Calu3 (cell line): ENCODE measurements at regions of chr6 and their contacts with region 1.

Region 1: DNA sequence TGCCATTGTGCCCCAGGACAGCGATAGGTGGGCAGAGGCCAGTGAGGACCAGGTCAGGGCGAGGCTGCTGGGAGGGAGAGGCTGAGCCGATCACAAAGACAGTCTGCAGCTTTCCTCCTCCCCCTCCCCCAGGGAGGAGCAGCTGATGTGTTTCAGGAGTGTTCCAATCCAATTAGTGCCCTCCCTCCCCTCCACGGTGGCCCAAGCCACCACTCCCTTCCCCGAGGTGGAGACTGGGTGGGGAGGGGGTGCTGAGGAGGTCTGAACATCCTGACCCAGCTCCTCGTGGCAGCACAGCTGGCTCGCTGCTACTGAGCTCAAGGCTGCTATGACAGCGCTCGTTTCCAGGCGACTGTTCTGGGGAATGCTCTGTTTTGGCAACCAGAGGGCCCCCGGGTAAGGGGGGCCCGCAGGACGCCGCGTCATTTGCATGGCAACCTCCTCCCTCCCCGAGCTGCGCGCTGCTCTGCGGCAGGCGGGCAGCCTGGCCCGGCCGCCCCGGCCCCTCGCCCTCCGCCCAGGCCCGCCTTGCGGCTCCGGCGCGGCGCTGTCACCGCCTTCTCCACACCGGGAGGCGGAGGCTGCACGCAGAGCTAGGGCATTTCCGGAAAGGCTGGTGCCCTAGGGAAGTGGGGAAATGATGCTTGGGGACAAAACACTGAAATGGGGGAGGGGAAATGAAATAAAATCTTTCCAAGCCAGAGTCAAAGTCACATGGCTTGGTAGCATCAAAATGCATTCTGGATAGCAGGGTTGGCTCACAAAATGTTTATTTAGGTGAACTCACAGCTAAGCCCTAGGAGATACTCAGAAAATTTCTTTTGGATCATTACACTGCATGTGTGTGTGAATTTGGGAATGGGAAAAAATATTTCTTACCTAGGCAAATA is 67.4 kb upstream of the PIM1 start:
- DNase-seq: peak; percentile 75
- H3K4me3 Mint-ChIP-seq: peak overlapping the region; percentile 67
- H3K27ac Mint-ChIP-seq: peak overlapping the region; percentile 81
- H3K4me1 Mint-ChIP-seq: peaks cover 45% of the 10 kb centered on the region
- H3K27me3 Mint-ChIP-seq: no peaks in the 10 kb centered on the region
- CTCF ChIP-seq: no peak

Region 2: DNA sequence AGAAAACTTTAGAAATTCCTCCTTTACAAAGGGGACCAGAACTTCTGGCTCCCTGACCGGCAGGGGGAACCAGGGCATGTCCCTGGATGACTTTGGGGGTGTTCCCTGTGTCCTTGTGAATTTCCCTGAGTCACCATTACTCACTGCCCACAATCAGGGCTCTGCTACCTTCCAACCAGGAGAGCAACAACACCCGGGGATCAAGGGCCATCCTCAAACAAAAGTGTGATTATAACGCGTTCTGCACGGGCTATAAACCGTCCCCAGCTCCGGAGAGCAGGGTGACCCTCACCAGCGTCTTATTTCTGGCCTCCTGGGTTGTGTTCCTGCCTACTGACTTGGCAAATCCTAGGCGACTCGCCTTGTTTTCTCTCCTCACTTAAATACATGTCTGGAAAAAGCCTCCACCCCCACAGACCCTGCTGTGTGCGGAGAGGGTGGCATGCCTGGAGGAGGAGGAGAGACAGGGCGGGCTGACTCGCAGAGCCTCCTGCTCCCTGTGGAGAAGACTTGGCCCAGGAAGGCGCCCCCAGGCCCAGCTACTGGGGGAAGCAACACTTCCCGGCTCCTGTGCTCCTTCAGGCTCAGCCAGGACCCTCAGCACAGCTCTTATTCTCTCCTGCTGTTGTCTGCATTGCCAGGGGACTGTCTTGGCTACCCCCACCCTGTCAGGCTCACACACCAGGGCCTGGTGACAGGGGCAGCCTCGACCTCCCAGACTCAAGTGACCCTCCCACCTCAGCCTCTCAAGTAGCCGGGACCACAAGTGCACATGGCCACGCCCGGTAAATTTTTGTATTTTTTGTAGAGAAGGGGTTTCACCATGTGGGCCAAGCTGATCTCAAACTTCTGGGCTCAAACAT is 42.9 kb before region 1 on chr6:
- CTCF ChIA-PET with region 1: interaction called, 8 read pairs
- intact Hi-C with region 1: loop called (anchors 5 kb)
- DNase-seq: peak; percentile 90
- H3K4me3 Mint-ChIP-seq: peak overlapping the region; percentile 53
- H3K27ac Mint-ChIP-seq: peak overlapping the region; percentile 79
- H3K4me1 Mint-ChIP-seq: peaks cover 64% of the 10 kb centered on the region
- H3K27me3 Mint-ChIP-seq: no peaks in the 10 kb centered on the region
- CTCF ChIP-seq: peak; percentile 77

Region 3: DNA sequence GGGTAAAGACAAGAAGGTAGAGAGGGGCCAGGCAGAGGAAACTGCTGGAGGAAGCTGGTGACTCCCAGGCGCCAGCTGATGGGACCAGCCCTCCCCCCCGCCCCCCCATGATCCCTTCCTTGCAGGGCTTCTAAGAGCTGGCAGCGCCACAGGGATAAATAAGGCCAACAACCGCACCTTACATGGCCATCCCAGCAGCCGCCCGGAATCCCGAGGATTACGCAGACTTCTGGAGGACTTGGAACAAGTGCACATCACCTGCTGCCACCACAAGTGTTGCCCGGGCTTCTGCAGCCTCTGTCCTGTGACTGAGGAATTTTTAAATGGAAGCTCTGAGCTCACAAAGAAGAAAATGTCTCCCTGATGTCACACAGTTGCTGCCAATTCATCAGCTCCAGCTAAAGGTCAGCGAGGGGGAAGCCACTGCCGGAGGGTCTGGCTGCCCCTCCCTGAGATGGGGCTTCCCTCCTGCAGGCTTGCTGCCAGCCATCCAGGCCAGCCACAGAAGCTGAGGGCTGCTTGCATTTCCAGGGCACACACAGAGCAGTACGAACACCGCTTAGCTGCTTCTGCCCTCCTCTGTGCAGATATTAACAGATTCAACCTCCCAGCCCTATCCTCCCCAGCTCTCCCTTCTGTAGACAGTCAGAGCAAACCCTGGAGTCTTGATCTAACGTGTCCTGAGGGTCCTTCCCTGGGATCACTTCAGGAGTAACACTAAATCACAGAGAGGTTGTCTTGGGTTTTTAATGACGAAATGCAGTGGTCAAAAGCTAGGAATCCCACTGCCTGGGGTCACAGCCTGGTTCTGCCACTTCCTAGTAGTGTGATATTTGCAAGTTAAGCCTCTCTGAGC is 28.8 kb after region 1 on chr6:
- CTCF ChIA-PET with region 1: interaction called, 11 read pairs
- intact Hi-C with region 1: loop called (anchors 2 kb)
- DNase-seq: peak; percentile 65
- H3K4me3 Mint-ChIP-seq: peak overlapping the region; percentile 5
- H3K27ac Mint-ChIP-seq: peak overlapping the region; percentile 51
- H3K4me1 Mint-ChIP-seq: peaks cover 75% of the 10 kb centered on the region
- H3K27me3 Mint-ChIP-seq: no peaks in the 10 kb centered on the region
- CTCF ChIP-seq: no peak

Region 4: DNA sequence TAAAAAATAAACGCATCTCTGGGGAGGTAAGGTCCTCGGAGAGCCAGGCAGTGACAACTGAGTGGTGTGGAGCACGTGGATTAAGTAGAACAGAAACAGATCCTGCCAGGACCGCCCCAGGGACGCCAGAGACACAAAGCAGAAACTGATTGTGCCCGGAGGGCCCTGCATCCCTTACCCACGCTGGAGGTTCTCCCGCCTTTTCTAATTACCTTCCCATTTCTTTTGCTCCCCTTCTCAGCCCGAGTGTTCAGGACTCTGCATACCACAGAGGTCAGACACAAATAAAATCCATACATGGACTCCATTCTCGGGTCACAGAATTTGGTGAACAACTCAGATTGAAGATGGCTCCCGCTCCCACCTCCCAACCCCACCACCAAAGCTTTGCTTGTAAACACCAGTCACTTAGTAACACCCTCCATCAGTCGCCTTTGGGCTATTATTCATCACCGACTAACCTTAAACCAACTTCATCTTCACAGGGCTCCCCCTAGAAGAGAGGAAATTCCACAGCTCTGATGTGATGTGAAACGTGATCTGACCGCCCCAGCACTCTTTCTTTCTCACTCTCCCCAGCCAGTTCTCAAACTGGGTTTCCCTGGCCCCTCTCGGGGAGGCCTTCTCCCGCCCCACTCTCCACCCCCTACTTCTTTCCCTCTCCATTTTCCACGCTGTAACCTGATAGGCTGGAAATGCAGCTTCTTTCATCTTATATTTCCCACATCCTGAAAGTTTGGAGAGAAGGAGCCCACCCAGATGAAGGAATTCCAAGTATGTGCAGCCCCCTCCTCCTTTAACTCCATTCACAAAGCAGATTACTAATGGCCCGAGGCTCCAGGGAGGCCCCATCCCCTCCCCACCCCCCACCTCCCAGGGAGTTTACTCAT is 34.9 kb after region 1 on chr6:
- CTCF ChIA-PET with region 1: interaction called, 5 read pairs
- intact Hi-C with region 1: loop called (anchors 2 kb)
- DNase-seq: peak; percentile 80
- H3K4me3 Mint-ChIP-seq: peak overlapping the region; percentile 62
- H3K27ac Mint-ChIP-seq: peak overlapping the region; percentile 98
- H3K4me1 Mint-ChIP-seq: peaks cover 62% of the 10 kb centered on the region
- H3K27me3 Mint-ChIP-seq: no peaks in the 10 kb centered on the region
- CTCF ChIP-seq: no peak